Activated T-helper 2 cell treated with anti-CD3 and anti-CD28 coated beads, Interferon-gamma antibody, Interleukin-2, Interleukin-4, amounts not matched to agents 10 μg/mL and 5 μg/mL and 100 μg/mL, durations not matched to agents 14 hours and 24 hours and 36 hours (primary cell): ENCODE measurements at regions of chr4 and their contacts with region 1.

Region 1: GRCh38 chr4:159048166-159048886 is 54.6 kb upstream of the RAPGEF2 start:
- DNase-seq: no peak
- H3K4me3 Mint-ChIP-seq: no peak overlapping the region
- H3K27ac Mint-ChIP-seq: no peak overlapping the region
- H3K4me1 Mint-ChIP-seq: peaks cover 34% of the 10 kb centered on the region
- H3K27me3 Mint-ChIP-seq: peaks cover 36% of the 10 kb centered on the region

Region 2: GRCh38 chr4:158722917-158723793 is 325.2 kb before region 1 on chr4 and contains the start of gene PPID:
- intact Hi-C with region 1: loop called (anchors 10 kb)
- DNase-seq: peak; percentile 77
- H3K4me3 Mint-ChIP-seq: peak within 1 kb of the TSS; percentile 95
- H3K27ac Mint-ChIP-seq: peak within 1 kb of the TSS; percentile 98
- H3K4me1 Mint-ChIP-seq: peaks cover 50% of the 10 kb centered on the region
- H3K27me3 Mint-ChIP-seq: peaks cover 2% of the 10 kb centered on the region
- total RNA-seq, gene PPID: 56.8 and 58.5 TPM in 2 replicates

Region 3: GRCh38 chr4:158873795-158874401 is 174.4 kb before region 1 on chr4:
- intact Hi-C with region 1: loop called (anchors 2 kb)
- DNase-seq: no peak
- H3K4me3 Mint-ChIP-seq: no peak overlapping the region
- H3K27ac Mint-ChIP-seq: no peak overlapping the region
- H3K4me1 Mint-ChIP-seq: peaks cover 12% of the 10 kb centered on the region
- H3K27me3 Mint-ChIP-seq: no peaks in the 10 kb centered on the region

Region 4: GRCh38 chr4:159065510-159066310 is 17.4 kb after region 1 on chr4:
- intact Hi-C with region 1: loop called (anchors 2 kb)
- DNase-seq: no peak
- H3K4me3 Mint-ChIP-seq: no peak overlapping the region
- H3K27ac Mint-ChIP-seq: no peak overlapping the region
- H3K4me1 Mint-ChIP-seq: peaks cover 6% of the 10 kb centered on the region
- H3K27me3 Mint-ChIP-seq: peaks cover 13% of the 10 kb centered on the region

Region 5: DNA sequence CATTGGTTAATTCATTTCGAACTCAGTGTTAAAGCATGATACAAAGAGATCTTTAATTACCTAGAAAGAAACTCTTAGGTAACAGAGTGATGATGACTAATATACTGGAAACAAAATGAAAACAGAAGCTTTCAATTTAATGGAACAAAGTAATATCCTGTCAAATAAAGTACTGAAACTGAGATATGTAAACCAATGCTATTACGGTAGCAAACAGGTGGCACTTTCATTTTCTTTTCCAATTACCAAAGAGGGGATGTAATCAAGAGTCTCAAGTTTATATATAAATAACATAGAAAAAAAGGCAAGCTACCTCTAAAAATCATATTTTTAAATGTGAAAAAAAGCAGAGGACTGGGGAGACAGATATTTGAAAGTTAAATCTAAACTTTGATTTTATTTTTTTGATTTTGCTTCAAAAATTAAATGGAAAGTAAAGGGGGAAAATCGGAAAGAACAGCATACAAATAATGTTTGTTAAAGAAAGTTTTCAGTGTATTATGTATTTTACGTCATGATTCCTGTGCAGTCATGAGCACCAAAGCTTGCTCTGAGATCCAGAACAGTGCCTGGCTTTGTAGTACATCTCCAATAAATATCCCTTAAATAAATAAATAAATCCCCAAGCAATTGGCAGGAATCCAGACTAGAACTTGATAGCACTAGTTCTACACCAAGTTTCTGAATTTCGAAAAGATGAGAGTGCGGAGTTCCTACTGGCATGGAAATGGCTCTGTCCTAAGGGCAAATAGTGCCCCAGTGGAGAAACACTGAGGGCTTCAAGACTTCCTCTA is 29.6 kb after region 1 on chr4:
- intact Hi-C with region 1: loop called (anchors 1 kb)
- DNase-seq: no peak
- H3K4me3 Mint-ChIP-seq: no peak overlapping the region
- H3K27ac Mint-ChIP-seq: no peak overlapping the region
- H3K4me1 Mint-ChIP-seq: peaks cover 9% of the 10 kb centered on the region
- H3K27me3 Mint-ChIP-seq: peaks cover 8% of the 10 kb centered on the region

Region 6: GRCh38 chr4:159102622-159103383 is 54.5 kb after region 1 on chr4 and contains the start of gene RAPGEF2:
- intact Hi-C with region 1: loop called (anchors 1 kb)
- DNase-seq: peak; percentile 84
- H3K4me3 Mint-ChIP-seq: peak within 1 kb of the TSS; percentile 82
- H3K27ac Mint-ChIP-seq: peak within 1 kb of the TSS; percentile 78
- H3K4me1 Mint-ChIP-seq: peaks cover 53% of the 10 kb centered on the region
- H3K27me3 Mint-ChIP-seq: peaks cover 21% of the 10 kb centered on the region
- total RNA-seq, gene RAPGEF2: 17.0 TPM in 2 replicates

Region 7: DNA sequence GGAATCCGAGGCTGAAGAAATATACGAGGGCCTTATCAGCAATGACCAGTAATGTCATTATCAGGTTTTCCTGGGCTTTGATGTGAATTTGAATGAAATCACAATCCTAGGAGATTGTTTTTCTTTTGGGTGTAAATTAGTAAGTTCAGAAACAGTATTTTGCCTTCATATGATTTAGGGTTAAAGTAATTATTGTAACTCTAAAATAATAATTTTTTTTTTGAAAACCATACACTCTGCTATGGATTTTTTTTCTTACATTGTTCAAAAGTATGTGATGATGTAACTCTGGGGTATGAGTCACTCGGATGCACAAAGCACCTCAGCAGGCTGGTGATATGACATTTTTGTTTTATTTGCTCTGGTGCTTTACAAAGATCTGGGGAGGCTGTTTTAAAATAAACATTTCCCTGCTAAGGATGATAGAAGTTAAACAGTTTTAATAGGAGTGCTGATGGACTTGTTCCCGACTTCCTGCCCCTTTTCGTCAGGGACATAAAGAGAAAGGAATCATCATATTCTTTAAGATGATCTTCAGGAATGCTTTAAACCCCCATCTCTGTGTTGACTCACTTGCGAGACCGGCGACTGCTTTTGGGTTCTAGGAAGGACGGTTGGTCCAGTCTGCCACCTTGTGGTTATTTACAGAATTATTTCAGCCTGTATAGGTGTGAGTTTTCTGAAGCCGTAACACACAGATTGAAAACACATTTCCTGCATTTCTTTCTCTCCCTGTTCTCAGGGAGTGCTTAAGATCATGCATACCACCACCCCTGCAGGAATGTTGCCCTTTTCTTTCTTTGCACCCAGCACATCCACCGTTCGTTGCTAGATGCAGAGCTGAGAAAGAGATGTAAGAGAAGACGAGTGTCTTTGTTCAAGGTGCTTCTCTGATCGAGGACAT is 127.0 kb after region 1 on chr4:
- intact Hi-C with region 1: loop called (anchors 5 kb)
- DNase-seq: peak; percentile 31
- H3K4me3 Mint-ChIP-seq: no peak overlapping the region
- H3K27ac Mint-ChIP-seq: no peak overlapping the region
- H3K4me1 Mint-ChIP-seq: peaks cover 31% of the 10 kb centered on the region
- H3K27me3 Mint-ChIP-seq: peaks cover 14% of the 10 kb centered on the region